ENCODE measurements at regions of chr15 and their contacts with region 1.

Region 1: GRCh38 chr15:99207672-99208071 is 41.7 kb downstream of the TTC23 start:
- DNase-seq: no peak
- ATAC-seq: no peak
- H3K4me3 ChIP-seq: no peak overlapping the region
- H3K27ac ChIP-seq: no peak overlapping the region
- H3K4me1 ChIP-seq: peaks cover 0 to 16% (median 0%) of the 10 kb centered on the region in 12 donors
- H3K27me3 ChIP-seq: no peaks in the 10 kb centered on the region
- CTCF ChIP-seq: no peak
- POLR2A ChIP-seq: no peak

Region 2: DNA sequence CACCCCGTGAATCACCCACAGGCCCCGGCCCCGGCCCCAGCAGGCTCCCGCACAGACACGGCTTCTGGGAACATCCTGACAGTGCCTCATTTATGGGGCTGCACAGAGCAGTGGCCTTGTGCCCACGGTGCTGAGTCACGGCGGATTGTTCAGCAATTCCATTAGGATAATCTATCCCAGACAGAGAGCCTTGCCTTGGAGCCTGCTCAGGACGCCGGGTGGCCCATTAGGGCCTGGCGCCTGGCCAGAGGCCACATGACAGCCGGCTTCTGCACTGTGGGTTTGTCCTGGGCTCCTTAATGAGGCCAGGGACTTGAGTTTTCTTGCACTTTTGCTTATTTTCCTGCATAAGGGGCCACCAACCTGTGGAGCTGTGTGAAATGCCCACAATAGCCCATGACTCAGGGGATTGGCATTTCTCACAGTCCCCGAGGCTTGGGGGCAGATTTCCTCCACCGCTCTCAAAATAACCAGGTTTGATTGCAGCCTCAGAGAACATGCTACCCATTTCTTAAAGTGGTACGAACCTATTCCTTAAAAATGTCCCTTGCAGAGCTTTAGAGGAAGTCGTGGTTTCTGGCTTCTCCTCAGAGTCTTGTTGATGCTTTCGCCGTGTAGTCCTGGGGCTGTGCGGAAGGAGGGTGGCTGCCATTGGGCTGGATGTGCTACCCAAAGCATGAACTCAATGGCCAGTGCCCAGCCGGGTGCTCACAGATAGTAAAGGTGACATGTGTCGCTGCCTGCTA is 83.8 kb before region 1 on chr15:
- intact Hi-C with region 1: no loop called
- DNase-seq: peak; percentile 76 to 91 (median 89)
- ATAC-seq: peak; percentile 86 to 89 (median 88)
- H3K4me3 ChIP-seq: peak overlapping the region in 11 of 12 donors; percentile 4 to 51 (median 32)
- H3K27ac ChIP-seq: peak overlapping the region; percentile 89 to 99 (median 92)
- H3K4me1 ChIP-seq: peaks cover 0 to 75% (median 42%) of the 10 kb centered on the region in 12 donors
- H3K27me3 ChIP-seq: no peaks in the 10 kb centered on the region
- CTCF ChIP-seq: no peak
- POLR2A ChIP-seq: peak in 1 of 2 donors; percentile 31

Region 3: DNA sequence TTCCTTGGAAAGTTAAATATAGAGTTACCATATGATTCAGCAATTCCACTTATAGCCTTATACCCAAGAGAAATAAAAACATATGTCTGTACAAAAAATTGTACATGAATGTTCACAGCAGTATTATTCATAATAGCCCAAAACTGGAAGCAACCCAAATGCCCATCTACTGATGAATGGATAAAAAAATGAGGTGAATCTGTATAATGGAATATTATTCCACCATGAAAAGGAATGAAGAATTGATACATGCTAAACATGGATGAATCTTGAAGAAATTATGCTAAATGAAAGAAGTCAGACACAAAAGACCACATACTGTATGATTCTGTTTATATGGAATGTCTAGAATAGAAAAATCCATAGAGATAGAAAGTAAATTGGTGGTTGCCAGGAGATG is 19.7 kb before region 1 on chr15:
- intact Hi-C with region 1: loop called in 1 of 10 experiments (anchors 2 kb)
- DNase-seq: no peak
- ATAC-seq: no peak
- H3K4me3 ChIP-seq: no peak overlapping the region
- H3K27ac ChIP-seq: no peak overlapping the region
- H3K4me1 ChIP-seq: peaks cover 0 to 13% (median 0%) of the 10 kb centered on the region in 12 donors
- H3K27me3 ChIP-seq: no peaks in the 10 kb centered on the region
- CTCF ChIP-seq: no peak
- POLR2A ChIP-seq: no peak

Measured in heart left ventricle (tissue), 16 donors.